HEK293 (cell line): ENCODE measurements at regions of chr12 and their contacts with region 1.

Region 1: DNA sequence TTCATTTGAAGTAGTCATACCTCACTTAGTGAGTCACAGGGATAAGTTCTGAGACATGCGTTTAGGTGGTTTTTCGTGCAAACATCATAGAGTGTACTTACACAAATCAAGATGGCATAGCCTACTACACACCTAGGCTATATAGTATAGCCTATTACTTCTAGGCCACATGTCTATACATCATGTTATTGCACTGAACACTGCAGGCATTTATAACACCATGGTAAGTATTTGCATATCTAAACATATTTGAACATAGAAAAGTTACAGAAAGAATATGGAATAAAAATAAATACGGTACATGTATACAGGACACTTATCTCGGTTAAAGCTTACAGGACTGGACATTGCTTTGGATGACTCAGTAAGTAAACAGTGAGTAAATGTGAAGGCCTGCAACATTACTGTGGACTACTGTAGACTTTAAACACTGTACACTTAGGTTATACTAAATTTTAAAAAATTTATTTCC is 670.6 kb downstream of the SLC16A7 start:
- H3K4me3 ChIP-seq: no peak overlapping the region
- H3K27ac ChIP-seq: no peak overlapping the region
- H3K4me1 ChIP-seq: no peaks in the 10 kb centered on the region
- CTCF ChIP-seq: no peak

Region 2: DNA sequence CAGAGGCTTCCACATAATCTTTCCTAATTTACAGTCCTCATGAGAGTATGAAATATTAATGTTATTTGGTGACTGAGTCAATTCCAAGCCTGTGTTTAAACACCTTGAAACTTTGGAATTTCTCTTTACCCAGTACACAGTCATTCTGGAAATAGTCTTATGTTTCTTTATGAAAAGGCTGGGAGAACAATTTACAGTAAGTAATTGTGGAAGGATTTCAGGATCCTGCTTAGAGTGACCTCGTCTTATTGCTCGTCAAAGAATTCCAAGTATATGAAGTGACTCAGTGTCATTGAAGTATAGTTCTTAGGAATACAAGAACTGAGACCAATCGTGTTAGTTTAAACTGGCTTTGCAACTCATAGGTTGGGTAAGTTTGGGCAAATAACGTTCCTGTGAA is 36.4 kb before region 1 on chr12:
- CTCF ChIA-PET with region 1: no interaction called
- POLR2A ChIA-PET with region 1: no interaction called
- H3K4me3 ChIP-seq: no peak overlapping the region
- H3K27ac ChIP-seq: no peak overlapping the region
- H3K4me1 ChIP-seq: no peaks in the 10 kb centered on the region
- CTCF ChIP-seq: no peak

Region 3: DNA sequence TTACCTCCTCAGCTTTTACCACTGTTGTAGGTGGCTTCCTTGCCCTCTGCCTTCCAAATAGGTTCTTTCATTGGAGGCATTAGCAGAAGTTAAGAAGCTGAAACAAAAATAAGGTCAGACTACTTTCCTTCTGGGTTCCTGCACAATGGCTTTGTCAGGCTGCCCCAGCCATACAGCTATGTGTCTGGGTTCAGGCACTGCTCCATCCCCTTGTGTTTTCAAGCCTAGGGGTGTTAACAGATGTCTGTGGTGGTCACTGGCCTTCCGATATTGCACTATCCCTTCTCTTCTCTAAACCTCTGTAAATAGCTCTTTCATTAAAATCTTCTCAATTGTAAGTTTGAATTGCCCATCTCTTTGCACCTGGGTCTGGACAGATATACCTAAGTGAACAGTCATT is 58.3 kb after region 1 on chr12:
- CTCF ChIA-PET with region 1: interaction called, 10 read pairs
- POLR2A ChIA-PET with region 1: no interaction called
- H3K4me3 ChIP-seq: no peak overlapping the region
- H3K27ac ChIP-seq: no peak overlapping the region
- H3K4me1 ChIP-seq: no peaks in the 10 kb centered on the region
- CTCF ChIP-seq: no peak